Gastrocnemius medialis (tissue), 4 donors: ENCODE measurements at regions of chrX and their contacts with region 1.

Region 1: DNA sequence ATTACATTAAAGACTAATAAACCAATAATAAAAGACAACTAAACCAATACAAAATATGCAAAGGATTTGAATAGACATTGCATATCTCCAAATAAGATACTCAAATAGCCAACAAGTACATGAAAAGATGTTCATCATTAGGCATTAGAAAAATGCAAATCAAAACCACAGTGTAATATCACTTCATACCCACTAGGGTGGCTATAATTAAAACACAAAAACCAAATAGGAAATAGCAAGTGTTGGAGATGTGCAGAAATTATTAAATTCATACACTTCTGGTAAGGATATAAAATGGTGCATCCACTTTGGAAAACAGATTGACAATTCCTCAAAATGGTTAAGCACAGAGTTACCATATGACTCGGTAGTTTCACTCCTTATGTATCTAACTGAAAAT is 860.8 kb upstream of the DIAPH2 start:
- DNase-seq: no peak
- ATAC-seq: no peak
- H3K4me3 ChIP-seq: no peak overlapping the region
- H3K27ac ChIP-seq: no peak overlapping the region
- H3K4me1 ChIP-seq: no peaks in the 10 kb centered on the region
- H3K27me3 ChIP-seq: no peaks in the 10 kb centered on the region
- CTCF ChIP-seq: peak in 1 of 5 experiments; percentile 20
- POLR2A ChIP-seq: no peak

Region 2: DNA sequence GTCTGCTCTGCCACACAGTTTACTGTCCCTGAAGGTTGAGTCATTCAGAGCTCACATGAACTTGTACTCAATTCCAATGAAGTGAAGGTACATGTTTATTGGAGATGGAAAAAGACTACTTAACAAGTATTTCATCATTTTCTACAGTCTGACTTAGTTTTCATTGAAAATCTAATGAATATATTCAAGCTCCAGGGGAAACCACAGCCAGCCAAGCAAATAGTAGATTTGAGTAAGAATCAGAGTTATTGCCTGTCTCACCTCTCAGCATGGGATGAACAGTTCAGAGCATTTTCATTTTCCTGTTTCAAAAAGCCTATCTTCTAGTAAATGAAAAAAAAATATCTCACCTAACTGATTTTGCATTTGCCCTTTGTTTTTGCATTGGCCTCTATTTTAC is 388.6 kb before region 1 on chrX:
- in situ Hi-C with region 1: no loop called
- intact Hi-C with region 1: no loop called
- DNase-seq: no peak
- ATAC-seq: no peak
- H3K4me3 ChIP-seq: no peak overlapping the region
- H3K27ac ChIP-seq: no peak overlapping the region
- H3K4me1 ChIP-seq: no peaks in the 10 kb centered on the region
- H3K27me3 ChIP-seq: no peaks in the 10 kb centered on the region
- CTCF ChIP-seq: no peak
- POLR2A ChIP-seq: no peak

Region 3: GRCh38 chrX:95841863-95842262 is 18.1 kb after region 1 on chrX:
- in situ Hi-C with region 1: no loop called
- intact Hi-C with region 1: loop called (anchors 1 kb)
- DNase-seq: no peak
- ATAC-seq: no peak
- H3K4me3 ChIP-seq: no peak overlapping the region
- H3K27ac ChIP-seq: no peak overlapping the region
- H3K4me1 ChIP-seq: no peaks in the 10 kb centered on the region
- H3K27me3 ChIP-seq: no peaks in the 10 kb centered on the region
- CTCF ChIP-seq: no peak
- POLR2A ChIP-seq: no peak

Region 4: DNA sequence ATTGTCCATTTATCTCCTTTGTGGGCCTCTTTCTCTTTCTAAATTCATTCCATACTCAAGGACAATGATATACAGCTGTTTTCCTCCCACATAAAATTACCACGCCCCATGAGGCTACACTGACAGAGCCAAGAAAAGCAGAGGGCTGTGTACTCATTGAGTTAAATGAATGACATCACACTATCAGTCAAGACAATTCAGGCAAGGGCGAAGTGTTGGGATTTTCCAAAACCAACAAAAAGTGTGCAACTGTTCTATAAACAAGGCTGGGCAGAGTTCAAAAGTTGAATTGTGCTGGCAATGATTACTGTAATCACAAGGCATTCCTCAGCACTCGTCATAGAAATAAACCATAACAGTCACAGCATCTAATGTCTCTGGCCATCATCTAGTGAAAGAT is 61.3 kb after region 1 on chrX:
- in situ Hi-C with region 1: no loop called
- intact Hi-C with region 1: no loop called
- DNase-seq: no peak
- ATAC-seq: peak in 1 of 2 donors; percentile 60
- H3K4me3 ChIP-seq: no peak overlapping the region
- H3K27ac ChIP-seq: no peak overlapping the region
- H3K4me1 ChIP-seq: no peaks in the 10 kb centered on the region
- H3K27me3 ChIP-seq: no peaks in the 10 kb centered on the region
- CTCF ChIP-seq: no peak
- POLR2A ChIP-seq: no peak